ENCODE measurements at regions of chr12 and their contacts with region 1.

Region 1: DNA sequence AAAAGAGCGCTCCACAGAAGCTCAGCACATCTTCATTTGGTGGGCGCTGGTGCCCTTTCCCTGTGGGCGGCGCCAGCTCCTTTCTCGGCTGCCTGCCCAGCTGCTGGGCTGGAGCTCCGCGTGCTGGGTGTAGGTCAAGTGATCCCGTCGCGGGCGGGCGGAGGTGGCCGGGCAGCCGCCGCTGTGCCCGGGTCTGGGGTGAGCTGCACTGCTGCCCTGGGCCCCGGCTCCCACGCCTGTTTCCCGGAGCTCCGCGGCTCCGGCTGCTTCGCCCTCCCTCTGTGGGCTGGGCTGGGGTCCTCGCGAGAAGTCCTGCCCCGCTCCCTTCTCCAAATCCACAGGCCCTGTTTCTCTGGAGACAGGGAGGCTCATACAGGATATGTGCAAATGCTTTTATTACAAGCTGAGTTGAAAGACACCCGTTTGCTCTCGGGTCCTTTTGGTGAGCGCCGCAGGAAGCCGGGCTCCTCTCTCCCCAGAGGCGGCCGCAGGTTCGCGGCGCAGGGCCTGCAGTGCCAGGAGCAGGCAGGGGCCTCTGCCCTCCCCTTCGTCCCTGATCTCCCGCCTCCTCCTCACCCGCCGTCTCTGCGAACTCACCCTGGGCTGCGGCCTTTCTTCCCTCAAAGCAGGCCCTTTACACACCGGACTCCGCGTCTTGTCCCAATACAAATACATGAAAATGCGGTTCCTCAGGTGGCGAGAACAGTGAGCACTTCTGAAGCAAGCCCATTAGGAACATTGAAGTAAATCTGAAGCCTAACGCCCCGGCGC is 67.8 kb upstream of the CAPRIN2 start:
- DNase-seq: peak; percentile 66 to 80
- ATAC-seq: peak; percentile 88 to 95 (median 92)
- H3K4me3 ChIP-seq: peak overlapping the region; percentile 11 to 71 (median 62)
- H3K27ac ChIP-seq: peak overlapping the region; percentile 33 to 88 (median 82)
- H3K4me1 ChIP-seq: peaks cover 0 to 23% (median 7%) of the 10 kb centered on the region in 9 donors
- H3K27me3 ChIP-seq: peaks cover 0 to 23% (median 0%) of the 10 kb centered on the region in 7 donors
- CTCF ChIP-seq: peak in 3 of 9 donors; percentile 12 to 31 (median 30)

Region 2: GRCh38 chr12:29545102-29545467 is 1277.5 kb before region 1 on chr12:
- intact Hi-C with region 1: loop called in 1 of 10 experiments (anchors 10 kb)
- DNase-seq: no peak
- ATAC-seq: no peak
- H3K4me3 ChIP-seq: no peak overlapping the region
- H3K27ac ChIP-seq: no peak overlapping the region
- H3K4me1 ChIP-seq: peaks cover 0 to 31% (median 16%) of the 10 kb centered on the region in 9 donors
- H3K27me3 ChIP-seq: no peaks in the 10 kb centered on the region
- CTCF ChIP-seq: no peak

Region 3: DNA sequence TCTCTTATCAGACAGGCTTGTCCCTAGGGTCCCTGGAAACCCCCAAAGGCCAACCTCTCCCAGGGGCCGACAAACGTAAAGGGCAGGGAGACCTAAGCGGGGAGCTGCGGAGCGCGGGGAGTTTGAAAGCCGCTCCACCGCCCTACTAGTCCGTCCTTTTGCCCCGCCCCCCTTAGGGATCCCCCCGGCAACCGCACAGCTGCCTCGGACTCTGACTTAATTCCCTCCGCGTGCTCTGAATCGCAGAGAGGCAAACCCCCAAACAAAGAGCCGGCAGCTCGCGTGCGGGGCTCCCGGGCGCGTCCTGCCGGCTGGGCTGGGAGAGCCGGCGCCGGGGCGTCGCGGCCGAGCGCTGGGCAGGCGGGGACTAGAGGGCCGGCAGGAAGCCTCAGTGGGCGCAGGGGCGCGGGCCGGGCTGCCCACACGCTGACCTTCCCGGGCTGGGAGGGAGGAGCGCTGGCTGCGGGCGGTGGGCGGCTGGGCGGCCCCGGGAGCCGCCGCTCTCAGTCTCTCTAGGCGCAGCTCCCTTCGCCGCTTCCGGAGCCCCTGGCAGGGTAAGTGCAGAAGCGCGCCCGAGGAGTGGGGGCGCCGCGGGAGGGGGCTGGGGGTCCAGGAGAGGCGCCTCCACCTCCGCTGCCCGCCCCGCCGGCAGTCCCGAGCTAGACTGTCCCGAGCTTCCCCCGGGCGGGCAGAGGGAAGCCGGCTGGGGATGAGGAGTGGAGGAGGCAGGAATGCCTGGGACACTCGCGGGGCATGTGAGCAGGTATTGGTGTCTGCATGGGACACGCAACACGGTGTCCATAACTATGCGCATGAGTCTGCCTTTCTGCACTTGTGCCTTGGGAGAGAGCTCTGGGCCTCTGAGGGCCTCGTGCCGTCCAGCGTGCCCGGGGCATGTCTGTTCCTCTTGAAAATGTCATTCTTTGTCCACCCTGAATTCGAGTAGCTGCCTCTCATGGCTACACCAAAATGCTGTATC is 104.0 kb after region 1 on chr12 and contains the start of gene TSPAN11:
- intact Hi-C with region 1: no loop called
- DNase-seq: peak; percentile 31 to 36
- ATAC-seq: peak; percentile 18 to 81 (median 62)
- H3K4me3 ChIP-seq: peak within 1 kb of the TSS in 9 of 10 donors; percentile 36 to 52 (median 44)
- H3K27ac ChIP-seq: peak within 1 kb of the TSS in 3 of 10 donors; percentile 25 to 50 (median 35)
- H3K4me1 ChIP-seq: peaks cover 0 to 22% (median 5%) of the 10 kb centered on the region in 9 donors
- H3K27me3 ChIP-seq: peaks cover 0 to 39% (median 28%) of the 10 kb centered on the region in 7 donors
- CTCF ChIP-seq: no peak
- total RNA-seq, gene TSPAN11: 0.60 to 2.9 (median 1.1) TPM

Measured in heart right ventricle (tissue), 16 donors.